ENCODE measurements at regions of chr9 and their contacts with region 1.

Region 1: GRCh38 chr9:112443200-112443599 is 43.4 kb upstream of the KIAA1958 start:
- DNase-seq: peak; percentile 24
- H3K4me3 Mint-ChIP-seq: no peak overlapping the region
- H3K27ac Mint-ChIP-seq: no peak overlapping the region
- H3K4me1 Mint-ChIP-seq: peaks cover 14% of the 10 kb centered on the region
- H3K27me3 Mint-ChIP-seq: no peaks in the 10 kb centered on the region
- CTCF ChIP-seq: peak; percentile 29

Region 2: GRCh38 chr9:112371060-112371459 is 72.1 kb before region 1 on chr9:
- CTCF ChIA-PET with region 1: no interaction called
- POLR2A ChIA-PET with region 1: no interaction called
- intact Hi-C with region 1: no loop called
- DNase-seq: peak; percentile 14
- H3K4me3 Mint-ChIP-seq: no peak overlapping the region
- H3K27ac Mint-ChIP-seq: no peak overlapping the region
- H3K4me1 Mint-ChIP-seq: no peaks in the 10 kb centered on the region
- H3K27me3 Mint-ChIP-seq: no peaks in the 10 kb centered on the region
- CTCF ChIP-seq: no peak

Region 3: GRCh38 chr9:112665347-112665746 is 222.1 kb after region 1 on chr9:
- CTCF ChIA-PET with region 1: interaction called, 7 read pairs
- POLR2A ChIA-PET with region 1: no interaction called
- intact Hi-C with region 1: loop called (anchors 1 kb)
- DNase-seq: peak; percentile 31
- H3K4me3 Mint-ChIP-seq: no peak overlapping the region
- H3K27ac Mint-ChIP-seq: no peak overlapping the region
- H3K4me1 Mint-ChIP-seq: no peaks in the 10 kb centered on the region
- H3K27me3 Mint-ChIP-seq: no peaks in the 10 kb centered on the region
- CTCF ChIP-seq: peak; percentile 36

Region 4: GRCh38 chr9:112711050-112711689 is 268.0 kb after region 1 on chr9:
- CTCF ChIA-PET with region 1: interaction called, 17 read pairs
- POLR2A ChIA-PET with region 1: no interaction called
- intact Hi-C with region 1: loop called (anchors 1 kb)
- DNase-seq: peak; percentile 38
- H3K4me3 Mint-ChIP-seq: no peak overlapping the region
- H3K27ac Mint-ChIP-seq: no peak overlapping the region
- H3K4me1 Mint-ChIP-seq: peaks cover 17% of the 10 kb centered on the region
- H3K27me3 Mint-ChIP-seq: no peaks in the 10 kb centered on the region
- CTCF ChIP-seq: peak; percentile 40

Measured in MCF 10A (cell line).